ENCODE measurements at regions of chr1 and their contacts with region 1.

Region 1: DNA sequence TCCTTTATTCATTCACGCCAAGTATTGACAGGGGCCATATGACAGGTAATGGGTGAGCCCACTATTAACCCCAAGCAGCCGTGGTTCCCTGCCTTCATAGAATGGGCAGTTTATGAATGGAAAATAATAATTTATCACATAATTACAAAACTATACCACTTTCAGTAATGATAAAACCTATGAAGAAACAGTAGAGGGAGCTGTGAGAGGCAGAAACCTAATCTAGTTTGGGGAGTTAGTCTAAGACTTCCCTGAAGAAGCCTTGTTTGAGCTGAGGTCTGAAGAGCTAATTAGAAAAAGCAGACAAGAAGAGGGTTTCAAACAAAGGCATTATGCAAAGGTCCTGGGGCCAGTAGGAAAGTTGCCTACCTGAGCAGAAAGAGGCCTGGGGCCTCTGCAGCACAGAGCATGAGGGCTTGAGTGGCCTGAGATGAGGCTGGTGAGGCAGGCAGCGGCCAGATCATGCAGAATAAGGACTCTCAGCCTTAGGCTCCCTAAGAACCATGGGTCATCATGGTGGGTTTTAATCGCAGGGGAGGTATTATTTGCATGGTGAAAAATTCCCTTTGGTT is 142.8 kb downstream of the ATG4C start:
- DNase-seq: peak; percentile 52
- H3K4me3 ChIP-seq: no peak overlapping the region
- H3K27ac ChIP-seq: peak overlapping the region; percentile 91
- H3K4me1 ChIP-seq: peaks cover 43% of the 10 kb centered on the region
- H3K27me3 ChIP-seq: no peaks in the 10 kb centered on the region
- CTCF ChIP-seq: peak; percentile 46

Region 2: DNA sequence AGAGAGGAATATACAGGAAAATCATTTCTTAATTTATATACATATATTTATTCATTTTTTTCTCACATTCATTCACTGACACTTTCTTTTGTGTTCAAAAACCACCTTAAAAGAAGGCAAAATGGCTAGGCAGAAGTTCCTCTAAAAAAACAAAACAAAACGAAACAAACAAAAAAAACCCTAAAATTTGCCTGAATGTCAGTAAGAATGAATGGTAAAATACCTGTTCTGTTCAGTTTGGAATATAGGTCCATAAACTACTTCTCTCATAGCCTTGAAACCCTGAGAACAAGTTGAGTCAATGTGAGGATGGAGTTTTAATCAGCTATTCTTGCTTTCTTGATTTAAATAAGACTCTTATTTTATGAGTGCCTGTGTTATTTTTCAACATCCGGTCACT is 426.0 kb after region 1 on chr1:
- CTCF ChIA-PET with region 1: no interaction called
- POLR2A ChIA-PET with region 1: no interaction called
- intact Hi-C with region 1: loop called (anchors 1 kb)
- DNase-seq: no peak
- H3K4me3 ChIP-seq: no peak overlapping the region
- H3K27ac ChIP-seq: no peak overlapping the region
- H3K4me1 ChIP-seq: no peaks in the 10 kb centered on the region
- H3K27me3 ChIP-seq: no peaks in the 10 kb centered on the region
- CTCF ChIP-seq: no peak

Region 3: GRCh38 chr1:63779338-63780211 is 852.8 kb after region 1 on chr1:
- CTCF ChIA-PET with region 1: no interaction called
- POLR2A ChIA-PET with region 1: no interaction called
- intact Hi-C with region 1: loop called (anchors 10 kb)
- DNase-seq: no peak
- H3K4me3 ChIP-seq: no peak overlapping the region
- H3K27ac ChIP-seq: no peak overlapping the region
- H3K4me1 ChIP-seq: peaks cover 28% of the 10 kb centered on the region
- H3K27me3 ChIP-seq: no peaks in the 10 kb centered on the region
- CTCF ChIP-seq: no peak

Measured in A673 (cell line).